Ovary (tissue), 10 donors: ENCODE measurements at regions of chr7 and their contacts with region 1.

Region 1: GRCh38 chr7:31134246-31135188 is 82.4 kb downstream of the ADCYAP1R1 start:
- DNase-seq: peak; percentile 62 to 75 (median 68)
- H3K4me3 ChIP-seq: no peak overlapping the region
- H3K27ac ChIP-seq: peak overlapping the region in 1 of 2 donors; percentile 7
- H3K4me1 ChIP-seq: peaks cover 2% of the 10 kb centered on the region
- H3K27me3 ChIP-seq: no peaks in the 10 kb centered on the region
- CTCF ChIP-seq: peak; percentile 30 to 46 (median 39)
- EP300 ChIP-seq: no peak
- POLR2A ChIP-seq: no peak

Region 2: DNA sequence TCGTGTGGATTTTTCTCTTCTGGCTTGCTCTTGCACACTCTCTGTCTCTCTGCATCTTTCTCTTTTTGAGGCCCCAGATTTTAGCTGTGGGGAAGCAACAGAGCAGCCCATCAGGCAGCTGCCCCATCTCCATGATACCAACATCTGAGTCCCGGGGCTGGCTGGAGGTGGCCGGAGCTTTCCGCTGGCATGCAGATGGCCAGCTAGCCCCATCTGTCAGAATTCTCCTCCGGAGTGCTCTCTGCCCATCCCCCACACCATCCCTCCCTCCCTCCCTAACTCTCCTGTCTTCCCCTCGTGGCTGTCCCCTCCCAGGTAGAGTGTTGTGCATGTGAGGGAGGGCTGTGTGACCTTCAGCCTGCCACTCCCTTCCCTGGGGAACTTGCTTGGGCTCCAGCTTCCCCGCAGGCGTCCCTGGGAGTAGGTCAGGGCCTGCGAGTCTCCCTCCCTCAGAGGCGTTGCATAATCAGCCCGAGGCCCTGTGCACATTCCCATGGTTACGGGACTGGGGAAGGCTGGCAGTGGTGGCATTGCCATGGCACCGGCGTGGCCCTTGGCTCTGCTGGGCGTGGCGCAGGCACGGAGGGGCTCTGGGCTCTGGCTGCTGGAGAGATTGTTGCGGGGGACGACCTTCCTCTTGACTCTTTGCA is 146.0 kb before region 1 on chr7:
- intact Hi-C with region 1: no loop called
- DNase-seq: peak in 3 of 5 donors; percentile 23 to 51 (median 51)
- H3K4me3 ChIP-seq: no peak overlapping the region
- H3K27ac ChIP-seq: no peak overlapping the region
- H3K4me1 ChIP-seq: peaks cover 5% of the 10 kb centered on the region
- H3K27me3 ChIP-seq: no peaks in the 10 kb centered on the region
- CTCF ChIP-seq: no peak
- EP300 ChIP-seq: no peak
- POLR2A ChIP-seq: no peak

Region 3: DNA sequence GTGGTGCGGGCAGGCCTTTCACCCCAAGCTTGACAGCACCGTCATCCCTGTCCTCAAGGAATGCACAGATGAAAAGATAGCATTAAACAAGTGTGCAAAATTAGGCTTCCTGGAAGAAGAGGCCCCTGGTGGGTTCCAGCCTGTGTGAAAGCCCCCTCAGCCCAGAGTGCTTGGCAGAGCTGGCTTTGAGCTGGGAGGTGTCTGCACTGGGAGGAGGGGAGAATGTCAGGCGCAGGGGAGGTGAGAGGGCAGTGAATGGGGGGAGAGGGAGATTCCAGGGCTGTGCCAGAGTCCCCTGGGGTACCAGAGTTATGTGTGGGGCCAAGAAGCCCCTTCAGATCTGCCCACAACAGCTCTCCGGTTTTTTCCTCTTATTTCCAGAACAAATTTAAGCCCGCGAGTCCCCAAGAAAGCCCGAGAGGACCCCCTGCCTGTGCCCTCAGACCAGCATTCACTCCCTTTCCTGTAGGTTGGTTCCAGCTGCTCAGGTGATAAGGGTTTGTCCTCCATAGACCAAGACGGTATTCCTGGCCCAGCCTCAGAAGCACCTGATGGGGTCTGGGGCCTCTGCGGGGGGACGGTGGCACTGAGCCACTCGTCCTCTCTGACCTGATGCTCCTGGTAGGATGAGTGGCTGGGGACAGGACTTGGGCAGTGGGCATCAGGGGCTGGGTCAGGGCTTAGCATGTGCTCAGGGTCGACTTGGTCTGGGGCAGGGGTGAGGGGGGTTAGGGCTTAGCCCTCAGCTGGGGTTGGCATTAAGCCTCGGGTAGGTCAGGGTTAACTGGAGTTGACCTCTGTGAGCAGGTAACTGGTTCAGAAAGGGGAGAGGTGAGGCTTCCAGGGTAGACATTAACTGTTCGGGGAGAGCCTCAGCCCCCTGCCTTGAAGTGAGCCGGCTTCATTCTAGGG is 39.0 kb before region 1 on chr7:
- intact Hi-C with region 1: no loop called
- DNase-seq: peak in 1 of 5 donors; percentile 6
- H3K4me3 ChIP-seq: no peak overlapping the region
- H3K27ac ChIP-seq: no peak overlapping the region
- H3K4me1 ChIP-seq: no peaks in the 10 kb centered on the region
- H3K27me3 ChIP-seq: no peaks in the 10 kb centered on the region
- CTCF ChIP-seq: no peak
- EP300 ChIP-seq: no peak
- POLR2A ChIP-seq: no peak

Region 4: GRCh38 chr7:31171216-31171785 is 36.8 kb after region 1 on chr7:
- intact Hi-C with region 1: loop called in 1 of 4 experiments (anchors 1 kb)
- DNase-seq: no peak
- H3K4me3 ChIP-seq: no peak overlapping the region
- H3K27ac ChIP-seq: no peak overlapping the region
- H3K4me1 ChIP-seq: no peaks in the 10 kb centered on the region
- H3K27me3 ChIP-seq: no peaks in the 10 kb centered on the region
- CTCF ChIP-seq: no peak
- EP300 ChIP-seq: no peak
- POLR2A ChIP-seq: no peak

Region 5: GRCh38 chr7:31228957-31229356 is 94.4 kb after region 1 on chr7:
- intact Hi-C with region 1: no loop called
- DNase-seq: no peak
- H3K4me3 ChIP-seq: no peak overlapping the region
- H3K27ac ChIP-seq: no peak overlapping the region
- H3K4me1 ChIP-seq: no peaks in the 10 kb centered on the region
- H3K27me3 ChIP-seq: no peaks in the 10 kb centered on the region
- CTCF ChIP-seq: no peak
- EP300 ChIP-seq: no peak
- POLR2A ChIP-seq: no peak

Region 6: DNA sequence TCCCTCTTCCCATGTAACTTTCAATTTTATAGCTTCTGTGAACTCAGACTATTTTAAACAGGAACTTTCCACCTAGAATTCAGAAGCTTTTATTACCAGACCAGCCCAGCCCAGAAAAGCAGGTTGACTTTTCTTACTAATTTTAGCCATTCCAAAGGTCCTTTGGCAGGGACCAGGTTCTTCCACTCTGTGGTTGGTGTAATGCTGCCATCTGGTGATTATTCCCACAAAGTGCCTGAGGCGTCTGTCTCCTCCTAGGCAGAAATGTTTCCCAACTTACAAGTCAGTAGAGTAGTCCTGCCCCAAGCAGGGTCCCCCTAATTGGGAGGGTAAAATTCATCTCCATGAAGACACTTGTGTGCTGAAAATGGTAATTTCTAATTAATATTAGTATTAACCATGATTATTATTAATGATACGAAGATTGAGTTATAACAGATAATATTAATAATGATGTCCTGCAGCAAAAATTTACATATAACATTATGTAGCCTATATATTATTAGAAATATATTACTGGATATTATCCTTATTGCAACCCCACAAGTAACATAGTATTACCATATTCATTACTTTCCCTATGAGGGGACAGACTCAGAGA is 499.5 kb after region 1 on chr7:
- intact Hi-C with region 1: loop called in 1 of 4 experiments (anchors 5 kb)
- DNase-seq: no peak
- H3K4me3 ChIP-seq: no peak overlapping the region
- H3K27ac ChIP-seq: no peak overlapping the region
- H3K4me1 ChIP-seq: no peaks in the 10 kb centered on the region
- H3K27me3 ChIP-seq: no peaks in the 10 kb centered on the region
- CTCF ChIP-seq: no peak
- EP300 ChIP-seq: no peak
- POLR2A ChIP-seq: no peak

Region 7: GRCh38 chr7:31735991-31736982 is 601.8 kb after region 1 on chr7:
- intact Hi-C with region 1: loop called in 2 of 4 experiments (anchors 10 kb)
- DNase-seq: peak; percentile 8 to 49 (median 33)
- H3K4me3 ChIP-seq: no peak overlapping the region
- H3K27ac ChIP-seq: no peak overlapping the region
- H3K4me1 ChIP-seq: no peaks in the 10 kb centered on the region
- H3K27me3 ChIP-seq: no peaks in the 10 kb centered on the region
- CTCF ChIP-seq: peak in 2 of 3 donors; percentile 27 to 62
- EP300 ChIP-seq: no peak
- POLR2A ChIP-seq: no peak

Region 8: GRCh38 chr7:31744294-31744874 is 609.9 kb after region 1 on chr7:
- intact Hi-C with region 1: loop called in 2 of 4 experiments (anchors 10 kb)
- DNase-seq: peak; percentile 18 to 69 (median 59)
- H3K4me3 ChIP-seq: no peak overlapping the region
- H3K27ac ChIP-seq: no peak overlapping the region
- H3K4me1 ChIP-seq: no peaks in the 10 kb centered on the region
- H3K27me3 ChIP-seq: no peaks in the 10 kb centered on the region
- CTCF ChIP-seq: peak; percentile 32 to 76 (median 60)
- EP300 ChIP-seq: no peak
- POLR2A ChIP-seq: no peak